HEK293 (cell line): ENCODE measurements at regions of chr2 and their contacts with region 1.

Region 1: GRCh38 chr2:148509288-148509902 is 135.2 kb upstream of the EPC2 start:
- H3K4me3 ChIP-seq: peak overlapping the region; percentile 24
- H3K27ac ChIP-seq: no peak overlapping the region
- H3K4me1 ChIP-seq: no peaks in the 10 kb centered on the region
- CTCF ChIP-seq: peak; percentile 83

Region 2: DNA sequence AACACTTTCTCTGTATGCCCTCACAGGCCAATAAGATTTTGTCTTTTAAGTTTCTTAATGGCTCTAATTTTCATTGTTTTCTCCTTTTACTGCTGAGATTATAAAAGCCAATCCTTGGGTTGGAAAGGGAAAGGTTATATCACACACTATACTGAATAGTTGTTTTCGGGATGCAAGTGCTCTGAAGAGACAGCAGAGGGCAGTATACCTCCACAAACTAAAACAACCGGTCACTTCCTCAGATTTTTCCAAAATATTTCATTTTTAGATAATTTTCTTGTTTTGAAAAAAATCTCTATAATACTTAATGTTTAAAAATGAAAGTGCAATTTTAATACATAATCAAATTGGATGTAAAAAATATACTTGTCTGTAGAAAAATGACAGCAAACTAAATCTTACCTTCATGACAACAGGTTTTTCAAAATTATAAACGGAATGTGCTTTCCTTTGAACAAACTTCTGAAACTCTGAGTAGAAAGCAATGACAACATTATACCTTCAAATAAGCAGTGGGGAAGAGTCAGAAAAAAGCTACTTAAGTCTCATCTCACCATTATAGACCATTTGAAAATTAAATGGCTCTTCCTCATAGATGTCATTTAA is 571.5 kb before region 1 on chr2:
- CTCF ChIA-PET with region 1: interaction called, 14 read pairs
- POLR2A ChIA-PET with region 1: no interaction called
- H3K4me3 ChIP-seq: no peak overlapping the region
- H3K27ac ChIP-seq: no peak overlapping the region
- H3K4me1 ChIP-seq: no peaks in the 10 kb centered on the region
- CTCF ChIP-seq: peak; percentile 47; the same call in 1 of the 2 replicates

Region 3: GRCh38 chr2:147989809-147990403 is 519.5 kb before region 1 on chr2:
- CTCF ChIA-PET with region 1: interaction called, 18 read pairs
- POLR2A ChIA-PET with region 1: no interaction called
- H3K4me3 ChIP-seq: no peak overlapping the region
- H3K27ac ChIP-seq: no peak overlapping the region
- H3K4me1 ChIP-seq: no peaks in the 10 kb centered on the region
- CTCF ChIP-seq: peak; percentile 50

Region 4: GRCh38 chr2:148020111-148021058 is 489.0 kb before region 1 on chr2 and contains the start of gene ORC4:
- CTCF ChIA-PET with region 1: interaction called, 11 read pairs
- POLR2A ChIA-PET with region 1: interaction called, 10 read pairs
- H3K4me3 ChIP-seq: peak within 1 kb of the TSS; percentile 72
- H3K27ac ChIP-seq: peak within 1 kb of the TSS; percentile 88
- H3K4me1 ChIP-seq: peaks cover 10% of the 10 kb centered on the region; the same call in 1 of the 2 replicates
- CTCF ChIP-seq: peak; percentile 100

Region 5: GRCh38 chr2:148493822-148494563 is 15.4 kb before region 1 on chr2:
- CTCF ChIA-PET with region 1: interaction called, 14 read pairs
- POLR2A ChIA-PET with region 1: no interaction called
- H3K4me3 ChIP-seq: no peak overlapping the region
- H3K27ac ChIP-seq: no peak overlapping the region
- H3K4me1 ChIP-seq: 0 out of 2 replicates have a peak, but pooled peaks cover 3% of the 10 kb centered on the region
- CTCF ChIP-seq: no peak